GM10248 (cell line): ENCODE measurements at regions of chr16 and their contacts with region 1.

Region 1: GRCh38 chr16:12573730-12574383 is 229.8 kb downstream of the CPPED1 start:
- DNase-seq: peak; percentile 69
- CTCF ChIP-seq: peak; percentile 57

Region 2: DNA sequence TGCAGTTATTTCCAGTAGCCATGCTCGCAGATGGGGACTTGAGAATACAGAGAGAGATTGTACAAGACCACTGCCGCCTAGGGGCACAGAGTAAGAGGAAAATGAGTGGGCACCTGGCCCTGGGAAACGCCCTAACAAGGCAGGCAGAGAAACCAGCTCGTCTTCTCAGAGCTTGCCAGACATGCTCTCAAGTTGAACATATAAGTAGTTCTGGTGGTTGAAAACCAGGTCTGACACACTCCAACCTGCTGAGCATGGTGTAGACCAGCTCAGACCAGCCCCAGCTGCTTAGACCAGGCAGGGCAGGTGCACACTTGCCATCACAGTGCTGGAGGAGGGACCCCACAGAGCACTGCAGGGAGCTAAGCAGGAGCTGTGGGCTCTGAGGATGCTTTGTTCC is 20.7 kb before region 1 on chr16:
- CTCF ChIA-PET with region 1: interaction called, 16 read pairs
- POLR2A ChIA-PET with region 1: no interaction called
- DNase-seq: no peak
- CTCF ChIP-seq: no peak

Region 3: GRCh38 chr16:12588510-12588909 is 14.7 kb after region 1 on chr16:
- CTCF ChIA-PET with region 1: interaction called, 10 read pairs
- POLR2A ChIA-PET with region 1: no interaction called
- DNase-seq: no peak
- CTCF ChIP-seq: no peak